Activated CD4-positive, alpha-beta T cell treated with anti-CD3 and anti-CD28 coated beads for 36 hours (primary cell): ENCODE measurements at regions of chr17 and their contacts with region 1.

Region 1: DNA sequence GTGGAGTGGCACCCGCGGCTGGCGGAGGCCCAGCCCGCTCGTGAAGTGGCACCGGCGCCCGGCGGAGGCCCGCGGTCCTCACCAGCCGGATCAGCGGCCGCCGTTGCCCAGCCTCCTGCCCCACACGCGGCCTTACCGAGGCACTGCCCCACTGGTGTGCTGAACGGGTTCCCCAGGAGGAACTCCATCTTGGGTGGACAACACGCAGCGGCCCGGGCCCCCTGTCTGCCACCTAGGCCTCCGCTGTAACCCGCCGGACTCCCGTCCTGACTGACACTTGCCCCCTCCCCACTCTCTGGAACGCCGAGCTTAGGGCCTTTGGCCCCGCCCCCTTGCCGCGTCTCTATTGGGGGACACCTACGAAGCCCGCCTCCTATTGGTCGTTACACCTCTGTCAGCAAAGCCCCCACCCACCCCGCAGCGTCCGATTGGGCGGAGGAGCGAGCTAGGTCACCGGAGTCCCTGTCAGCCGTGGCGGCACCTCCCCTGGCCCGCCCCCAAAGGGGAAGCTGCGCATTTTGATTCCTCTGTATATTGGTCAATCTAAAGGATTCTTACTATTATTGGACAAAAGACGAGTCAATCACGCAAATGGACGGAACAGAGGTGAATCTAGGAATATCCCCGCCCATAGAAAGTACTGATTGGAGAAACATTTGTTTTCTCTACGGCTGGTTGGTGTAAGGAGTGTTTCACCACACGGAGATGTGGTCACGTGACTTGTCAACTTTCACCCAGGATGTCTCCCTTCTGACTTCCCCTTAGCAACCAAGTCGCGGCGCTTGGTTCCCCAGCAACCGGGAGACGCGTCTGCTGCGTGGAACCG is at the starts of genes DRC3 and TOM1L2:
- DNase-seq: peak; percentile 100
- ATAC-seq: peak; percentile 97
- H3K4me3 Mint-ChIP-seq: peak within 1 kb of the TSS; percentile 86
- H3K27ac Mint-ChIP-seq: peak within 1 kb of the TSS; percentile 76
- H3K4me1 Mint-ChIP-seq: peaks cover 37% of the 10 kb centered on the region
- H3K27me3 Mint-ChIP-seq: no peaks in the 10 kb centered on the region
- total RNA-seq, gene DRC3: 0.11 to 0.18 TPM
- total RNA-seq, gene TOM1L2: 11.3 to 11.9 TPM

Region 2: DNA sequence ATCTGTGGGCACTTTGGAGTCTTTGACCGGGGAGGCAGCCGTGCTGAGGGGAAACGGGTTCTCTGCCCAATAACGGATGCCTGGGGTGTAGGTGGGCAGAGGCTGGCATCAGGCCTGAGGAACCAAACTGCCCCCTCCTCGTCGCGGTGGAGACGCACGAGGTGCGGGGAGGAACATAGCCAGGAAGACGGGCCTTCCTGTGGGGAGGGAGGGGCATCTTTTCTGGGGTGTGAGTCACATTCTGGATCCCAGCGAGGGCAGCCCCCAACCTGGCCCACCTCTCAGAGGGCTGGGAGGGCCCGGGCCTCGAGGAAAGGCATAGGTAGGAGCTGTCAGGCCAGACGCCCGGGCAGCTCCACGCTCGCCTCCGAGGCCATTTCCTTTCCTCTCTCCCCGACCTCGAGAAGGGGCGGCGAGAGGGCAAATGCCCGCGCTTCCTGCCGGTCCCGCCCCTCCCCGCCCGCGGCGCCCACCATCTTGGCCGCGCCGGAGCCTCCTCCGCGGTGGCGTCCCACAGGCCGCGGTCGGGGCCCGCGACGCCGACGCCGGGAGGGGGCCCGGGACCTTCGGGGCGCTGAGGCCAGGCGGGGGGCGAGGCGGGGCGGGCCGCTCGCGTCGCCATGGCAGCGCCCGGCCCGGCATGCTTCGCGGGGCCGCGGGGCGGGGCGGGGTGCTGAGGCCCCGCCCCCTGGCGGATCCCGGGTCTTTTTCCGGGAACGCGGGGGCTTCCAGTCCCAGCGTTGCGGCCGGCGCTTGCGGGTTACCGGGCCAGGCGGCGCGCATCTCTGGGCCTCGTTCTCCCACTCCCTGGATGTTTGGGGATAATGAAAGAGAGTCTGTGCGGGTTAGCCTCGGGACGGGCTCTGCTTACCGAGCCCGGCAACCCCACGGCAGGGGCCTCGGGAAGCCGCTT is 277.9 kb before region 1 on chr17:
- CTCF ChIA-PET with region 1: no interaction called
- POLR2A ChIA-PET with region 1: no interaction called
- intact Hi-C with region 1: loop called in 1 of 2 experiments (anchors 1 kb)
- DNase-seq: peak; percentile 79
- ATAC-seq: peak; percentile 69
- H3K4me3 Mint-ChIP-seq: peak overlapping the region; percentile 81
- H3K27ac Mint-ChIP-seq: peak overlapping the region; percentile 98
- H3K4me1 Mint-ChIP-seq: peaks cover 66% of the 10 kb centered on the region
- H3K27me3 Mint-ChIP-seq: no peaks in the 10 kb centered on the region

Region 3: DNA sequence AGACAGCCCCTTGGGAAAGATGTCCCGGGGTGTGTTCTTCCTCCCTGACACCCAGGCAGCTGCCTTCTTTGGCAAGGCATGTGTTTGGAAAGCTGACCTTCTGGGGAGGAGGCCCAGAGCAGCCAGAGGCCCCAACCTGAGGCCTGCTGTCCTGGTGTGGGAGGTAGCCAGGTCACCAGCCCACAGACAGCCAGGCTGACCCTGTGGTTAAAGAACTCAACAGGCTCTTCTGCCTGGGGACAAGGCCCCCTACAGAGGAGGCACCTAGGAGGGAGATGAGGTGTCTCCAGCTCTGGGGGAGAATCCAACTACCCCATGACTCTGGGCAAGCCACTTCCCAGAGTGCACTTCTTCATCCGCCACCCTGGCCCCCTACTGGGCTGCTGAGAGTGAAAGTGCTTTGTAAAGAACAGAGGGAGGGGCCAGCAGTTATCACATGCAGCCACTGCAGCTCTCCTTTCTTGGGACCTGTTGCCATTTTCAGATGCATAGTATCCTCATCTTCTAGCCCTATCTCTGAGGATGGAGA is 122.4 kb before region 1 on chr17:
- CTCF ChIA-PET with region 1: no interaction called
- POLR2A ChIA-PET with region 1: interaction called, 5 read pairs
- intact Hi-C with region 1: loop called in 1 of 2 experiments (anchors 1 kb)
- DNase-seq: peak; percentile 90
- ATAC-seq: peak; percentile 64
- H3K4me3 Mint-ChIP-seq: peak overlapping the region; percentile 34
- H3K27ac Mint-ChIP-seq: peak overlapping the region; percentile 95
- H3K4me1 Mint-ChIP-seq: peaks cover 72% of the 10 kb centered on the region
- H3K27me3 Mint-ChIP-seq: no peaks in the 10 kb centered on the region

Region 4: DNA sequence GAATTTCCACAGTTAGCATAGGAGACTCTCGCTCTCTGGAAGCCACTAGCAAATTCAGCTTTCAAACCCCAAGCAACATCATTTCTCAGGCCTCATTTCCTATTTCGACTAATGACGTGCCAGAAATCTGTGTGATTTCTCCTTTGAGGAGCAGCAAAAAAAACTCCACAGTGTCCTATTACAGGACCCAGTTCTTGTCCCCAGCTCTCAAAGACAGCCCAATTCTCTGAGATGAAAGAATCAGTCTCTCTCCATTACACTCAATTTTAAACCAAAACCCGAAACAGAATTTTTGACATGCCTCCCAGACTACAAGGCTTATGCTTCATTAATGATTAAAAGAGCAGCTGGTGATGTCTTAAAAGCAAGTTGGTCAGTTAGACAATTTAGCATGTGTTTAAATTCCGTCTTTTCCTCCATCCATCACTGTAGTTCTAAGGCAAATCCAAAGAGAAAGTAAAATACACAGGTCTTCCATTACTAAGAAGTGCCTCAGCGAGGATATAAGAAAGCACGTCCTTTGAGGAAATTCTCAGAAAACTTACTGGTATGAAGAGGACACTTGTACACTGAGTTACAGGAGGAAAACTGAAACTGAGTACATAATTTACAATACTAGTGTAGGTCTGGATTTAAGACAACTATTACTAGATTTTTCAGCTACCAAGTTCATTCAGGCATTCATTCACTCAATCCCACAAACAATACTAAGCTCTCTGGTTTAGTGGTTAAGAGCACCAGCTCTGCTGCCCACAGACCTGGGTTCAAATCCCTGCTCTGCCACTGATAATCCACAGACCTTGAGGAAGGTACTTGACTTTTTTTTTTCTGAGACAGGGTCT is 12.6 kb before region 1 on chr17:
- CTCF ChIA-PET with region 1: interaction called, 8 read pairs
- POLR2A ChIA-PET with region 1: interaction called, 19 read pairs
- intact Hi-C with region 1: loop called (anchors 1 kb)
- DNase-seq: peak; percentile 67
- ATAC-seq: peak; percentile 61
- H3K4me3 Mint-ChIP-seq: peak overlapping the region; percentile 71
- H3K27ac Mint-ChIP-seq: peak overlapping the region; percentile 95
- H3K4me1 Mint-ChIP-seq: peaks cover 69% of the 10 kb centered on the region
- H3K27me3 Mint-ChIP-seq: no peaks in the 10 kb centered on the region

Region 5: DNA sequence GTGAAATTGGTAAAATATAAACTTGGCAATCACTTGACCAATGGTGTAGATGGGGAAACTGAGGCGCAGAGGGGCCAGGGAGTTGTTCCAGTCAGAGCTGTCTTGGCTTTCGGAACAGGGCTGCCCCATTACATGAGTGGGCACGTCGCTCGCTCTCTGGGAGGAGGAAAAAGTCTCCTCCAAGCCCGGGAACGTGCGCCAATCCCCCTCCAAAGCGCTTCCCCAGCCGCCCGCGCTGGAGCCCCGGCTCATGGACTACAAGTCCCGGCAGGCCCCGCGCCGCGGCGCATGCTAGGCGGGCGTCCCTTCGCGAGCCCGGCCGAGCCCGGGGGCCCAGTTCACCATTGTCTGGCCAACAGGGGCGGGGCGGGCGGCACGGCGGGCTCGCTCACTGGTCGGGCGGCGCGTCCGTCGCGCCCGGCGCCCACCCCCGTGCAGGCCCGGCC is 252.8 kb after region 1 on chr17:
- CTCF ChIA-PET with region 1: no interaction called
- POLR2A ChIA-PET with region 1: no interaction called
- intact Hi-C with region 1: loop called in 1 of 2 experiments (anchors 1 kb)
- DNase-seq: peak; percentile 99
- ATAC-seq: peak; percentile 98
- H3K4me3 Mint-ChIP-seq: peak overlapping the region; percentile 56
- H3K27ac Mint-ChIP-seq: peak overlapping the region; percentile 55
- H3K4me1 Mint-ChIP-seq: peaks cover 18% of the 10 kb centered on the region
- H3K27me3 Mint-ChIP-seq: no peaks in the 10 kb centered on the region